ENCODE measurements at regions of chr9 and their contacts with region 1.

Region 1: GRCh38 chr9:121121582-121122087 is 46.9 kb downstream of the CNTRL start:
- DNase-seq: peak; percentile 77 to 95
- ATAC-seq: peak; percentile 100
- H3K4me3 ChIP-seq: peak overlapping the region; percentile 55
- H3K27ac ChIP-seq: peak overlapping the region; percentile 56 to 60
- H3K4me1 ChIP-seq: peaks cover 12% of the 10 kb centered on the region
- CTCF ChIP-seq: no peak
- EP300 ChIP-seq: no peak
- POLR2A ChIP-seq: peak; percentile 25; the same call in 1 of the 2 replicates
- RAD21 ChIP-seq: no peak

Region 2: DNA sequence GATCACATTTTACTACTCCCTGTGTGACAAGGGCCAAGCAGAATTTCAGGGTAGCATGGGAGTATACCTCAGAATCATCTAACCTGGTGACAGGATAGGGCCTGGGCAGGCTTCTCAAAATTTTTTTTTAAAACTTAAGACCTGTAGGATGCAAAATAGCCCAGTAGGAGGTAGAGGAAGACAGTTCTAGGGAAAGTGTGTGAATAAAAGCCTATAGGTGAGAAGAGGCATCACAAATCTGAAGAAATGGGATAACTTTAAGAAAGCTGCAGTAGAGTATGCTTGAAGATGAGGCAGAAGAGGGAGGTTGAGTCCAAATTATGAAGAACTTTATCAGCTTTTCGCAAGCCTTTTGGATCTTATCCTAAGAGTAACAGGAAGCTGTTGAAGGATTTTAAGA is 14.6 kb before region 1 on chr9:
- CTCF ChIA-PET with region 1: interaction called, 10 read pairs
- POLR2A ChIA-PET with region 1: interaction called, 10 read pairs
- DNase-seq: peak; percentile 27 to 42
- ATAC-seq: peak; percentile 82 to 85
- H3K4me3 ChIP-seq: no peak overlapping the region
- H3K27ac ChIP-seq: no peak overlapping the region
- H3K4me1 ChIP-seq: no peaks in the 10 kb centered on the region
- CTCF ChIP-seq: no peak
- EP300 ChIP-seq: no peak
- POLR2A ChIP-seq: no peak
- RAD21 ChIP-seq: no peak; a peak in 1 of 5 replicates

Region 3: DNA sequence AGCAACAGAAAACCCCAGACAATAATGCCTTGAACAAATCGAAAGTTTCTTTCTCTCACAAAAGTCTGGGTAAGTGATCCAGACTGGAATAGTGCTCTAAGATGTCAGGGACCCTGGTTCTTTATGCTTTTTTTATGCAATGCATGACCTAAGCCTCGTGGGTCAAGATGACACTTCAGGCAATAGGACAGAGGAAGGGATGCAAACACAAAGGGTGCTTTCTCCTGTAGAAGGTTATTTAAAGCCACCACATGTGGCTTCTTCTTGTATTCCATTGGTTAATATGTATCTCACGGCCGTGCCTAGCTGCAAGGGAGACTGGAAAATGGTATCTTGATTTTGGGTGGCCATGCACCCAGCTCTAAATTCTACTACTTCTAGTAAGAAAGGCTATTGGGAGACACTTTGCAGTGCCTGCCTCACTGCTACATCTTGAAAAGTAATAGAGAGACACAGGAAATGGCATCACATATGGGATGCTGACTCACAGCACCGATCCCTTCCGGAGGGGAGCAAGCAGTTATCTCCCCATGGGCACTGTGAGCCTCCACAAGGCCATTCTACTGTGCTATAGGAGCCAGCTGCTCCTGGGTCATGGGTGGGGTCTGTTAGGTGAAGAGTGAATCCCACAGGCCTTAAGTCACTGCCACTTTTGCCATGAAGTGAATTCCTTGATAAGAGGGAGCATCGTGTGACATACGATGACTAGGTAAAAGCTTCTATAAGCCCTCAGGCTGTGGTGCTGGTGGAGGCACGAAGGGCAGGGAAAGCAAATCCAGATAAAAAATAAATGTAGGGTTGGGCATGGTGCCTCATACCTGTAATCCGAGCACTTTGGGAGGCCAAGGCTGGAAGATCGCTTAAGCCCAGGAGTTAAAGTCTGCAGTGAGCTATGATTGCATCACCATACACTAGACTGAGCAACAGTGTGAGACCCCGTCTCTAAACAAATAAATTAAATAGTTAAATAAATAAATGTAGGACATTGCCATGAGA is 112.6 kb after region 1 on chr9:
- CTCF ChIA-PET with region 1: no interaction called
- POLR2A ChIA-PET with region 1: no interaction called
- DNase-seq: no peak
- ATAC-seq: no peak
- H3K4me3 ChIP-seq: no peak overlapping the region
- H3K27ac ChIP-seq: no peak overlapping the region
- H3K4me1 ChIP-seq: 0 out of 3 replicates have a peak, but pooled peaks cover 5% of the 10 kb centered on the region
- CTCF ChIP-seq: no peak
- EP300 ChIP-seq: no peak
- POLR2A ChIP-seq: no peak
- RAD21 ChIP-seq: no peak

Region 4: DNA sequence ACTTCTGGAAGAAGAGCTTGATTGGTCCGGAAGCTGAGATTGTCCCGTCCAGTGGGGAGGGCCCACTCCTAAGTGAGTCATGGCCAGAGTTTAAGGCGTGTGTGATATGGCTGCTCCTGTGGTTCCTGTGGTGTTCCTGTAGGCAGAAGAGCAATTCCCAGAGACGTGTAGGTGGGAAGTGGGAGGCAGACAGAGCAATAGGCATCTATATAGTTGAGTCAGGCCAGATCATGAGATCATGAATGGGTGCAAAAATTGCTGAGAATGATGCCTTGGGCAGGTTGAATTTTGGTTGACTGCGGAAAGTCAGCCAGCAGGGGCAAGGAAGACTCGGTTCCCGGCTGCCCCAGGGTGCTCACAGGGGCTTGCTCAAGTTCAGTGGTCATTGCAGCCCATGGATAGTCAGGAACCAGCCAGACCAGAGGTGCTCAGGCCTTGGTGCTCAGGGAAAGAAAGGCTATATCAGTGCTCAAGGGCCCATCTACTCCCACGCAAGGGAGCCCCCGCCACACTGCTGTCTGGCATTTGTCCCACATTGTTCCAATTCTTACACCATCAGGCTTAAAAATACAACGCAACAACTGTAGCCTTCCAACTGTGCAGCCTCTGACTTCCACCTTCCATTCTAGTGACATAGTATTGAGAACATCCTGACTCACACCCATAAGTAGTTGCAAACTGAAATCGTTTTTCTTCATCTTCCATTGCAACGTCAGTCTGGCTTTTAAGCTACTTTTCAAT is 125.4 kb after region 1 on chr9:
- CTCF ChIA-PET with region 1: no interaction called
- POLR2A ChIA-PET with region 1: no interaction called
- DNase-seq: no peak
- ATAC-seq: no peak
- H3K4me3 ChIP-seq: no peak overlapping the region
- H3K27ac ChIP-seq: no peak overlapping the region
- H3K4me1 ChIP-seq: no peaks in the 10 kb centered on the region
- CTCF ChIP-seq: no peak
- EP300 ChIP-seq: no peak
- POLR2A ChIP-seq: no peak
- RAD21 ChIP-seq: no peak

Region 5: DNA sequence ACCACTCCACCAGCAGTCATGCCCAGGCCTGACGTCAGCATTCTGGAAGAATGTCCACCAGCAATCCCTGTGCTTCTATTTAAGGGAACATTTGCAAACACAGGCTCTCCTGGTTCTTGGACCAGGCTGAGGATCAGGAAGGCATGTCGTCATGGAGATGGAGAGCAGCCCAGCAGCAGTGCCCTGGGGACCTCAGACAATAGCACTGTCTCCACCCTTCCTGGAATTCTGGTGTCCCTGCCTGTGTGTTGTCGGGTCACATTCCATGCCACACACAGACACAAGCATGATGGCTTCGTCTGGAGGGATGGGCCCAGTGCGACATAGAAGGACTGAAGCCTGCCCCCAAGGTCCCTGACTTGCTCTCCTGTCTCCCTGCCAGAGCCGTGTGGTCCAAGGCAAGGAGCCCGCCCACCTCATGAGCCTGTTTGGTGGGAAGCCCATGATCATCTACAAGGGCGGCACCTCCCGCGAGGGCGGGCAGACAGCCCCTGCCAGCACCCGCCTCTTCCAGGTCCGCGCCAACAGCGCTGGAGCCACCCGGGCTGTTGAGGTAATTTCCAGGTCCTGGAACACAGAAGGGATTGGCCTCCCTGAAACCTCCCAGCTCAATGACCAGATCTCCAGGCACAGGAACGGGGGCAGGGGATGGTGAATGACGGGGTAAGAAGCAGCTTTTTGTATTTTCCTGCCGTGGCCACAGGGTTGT is 204.6 kb after region 1 on chr9:
- CTCF ChIA-PET with region 1: no interaction called
- POLR2A ChIA-PET with region 1: no interaction called
- DNase-seq: peak in 1 of 2 experiments; percentile 88
- ATAC-seq: peak; percentile 38 to 65; a peak in 5 of 6 replicates
- H3K4me3 ChIP-seq: no peak overlapping the region
- H3K27ac ChIP-seq: peak overlapping the region; percentile 90 to 92
- H3K4me1 ChIP-seq: peaks cover 61% of the 10 kb centered on the region
- CTCF ChIP-seq: no peak
- EP300 ChIP-seq: peak in 1 of 2 experiments; percentile 24; a peak in 1 of 5 replicates
- POLR2A ChIP-seq: no peak
- RAD21 ChIP-seq: no peak

Measured in A549 (cell line).